CD8-positive, alpha-beta T cell (primary cell): ENCODE measurements at regions of chr11 and their contacts with region 1.

Region 1: DNA sequence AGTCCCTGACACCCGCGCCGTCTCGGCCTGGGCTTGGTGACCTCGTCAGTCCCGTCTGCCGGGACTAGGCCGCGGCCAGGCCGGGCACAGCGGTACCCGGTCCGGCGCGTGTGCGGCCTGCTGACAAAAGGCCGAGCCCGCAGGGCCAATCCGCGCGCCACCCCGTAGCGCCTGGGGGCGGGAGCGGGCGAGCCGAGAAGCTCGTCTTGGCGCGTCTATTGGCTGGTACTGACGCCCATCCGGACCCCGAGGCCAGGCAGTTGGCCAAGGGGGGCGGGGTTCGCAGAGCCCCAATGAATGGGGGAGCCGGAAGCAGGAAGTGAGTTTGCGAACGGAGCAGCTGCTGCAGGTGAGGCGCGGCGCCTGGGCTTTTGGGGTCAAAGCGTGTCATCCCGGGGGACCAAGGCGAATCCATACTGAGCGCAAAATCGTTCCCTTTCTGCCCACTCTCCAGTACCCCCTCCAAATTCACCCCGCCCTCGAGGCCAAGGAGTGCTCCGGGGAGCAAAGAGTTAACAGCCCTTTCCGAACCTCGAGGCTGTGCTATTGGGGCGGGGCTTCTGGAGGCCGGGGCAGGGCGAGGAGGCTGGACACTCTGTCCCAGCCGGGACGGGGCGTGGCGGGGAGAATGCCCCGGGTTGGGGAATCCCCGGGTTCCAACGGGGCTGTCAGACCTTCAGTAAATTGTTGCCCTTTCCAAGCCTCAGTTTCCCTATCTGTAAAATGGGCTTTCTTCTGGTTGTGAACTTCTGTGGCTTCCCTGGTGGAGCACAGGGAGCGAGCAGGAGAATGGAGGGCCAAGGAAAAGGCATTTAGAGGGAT is at the start of gene DPP3:
- DNase-seq: peak; percentile 91 to 97 (median 95)
- ATAC-seq: peak; percentile 98
- H3K4me3 ChIP-seq: peak within 1 kb of the TSS; percentile 90 to 93
- H3K4me3 Mint-ChIP-seq: peak within 1 kb of the TSS; percentile 89
- H3K27ac ChIP-seq: peak within 1 kb of the TSS; percentile 70 to 90
- H3K27ac Mint-ChIP-seq: peak within 1 kb of the TSS; percentile 89
- H3K4me1 ChIP-seq: peaks cover 17% of the 10 kb centered on the region
- H3K4me1 Mint-ChIP-seq: peaks cover 31% of the 10 kb centered on the region
- H3K27me3 ChIP-seq: no peaks in the 10 kb centered on the region
- H3K27me3 Mint-ChIP-seq: no peaks in the 10 kb centered on the region
- CTCF ChIP-seq: no peak
- total RNA-seq, gene DPP3: 13.7 to 15.6 TPM

Region 2: GRCh38 chr11:66510271-66510989 is 30.1 kb after region 1 on chr11 and contains the start of gene BBS1:
- CTCF ChIA-PET with region 1: no interaction called
- POLR2A ChIA-PET with region 1: no interaction called
- intact Hi-C with region 1: loop called (anchors 1 kb)
- DNase-seq: peak; percentile 62 to 91 (median 84)
- ATAC-seq: peak; percentile 98
- H3K4me3 ChIP-seq: peak within 1 kb of the TSS; percentile 68 to 81
- H3K4me3 Mint-ChIP-seq: peak within 1 kb of the TSS; percentile 88
- H3K27ac ChIP-seq: peak within 1 kb of the TSS; percentile 57 to 62
- H3K27ac Mint-ChIP-seq: peak within 1 kb of the TSS; percentile 22
- H3K4me1 ChIP-seq: peaks cover 15% of the 10 kb centered on the region
- H3K4me1 Mint-ChIP-seq: peaks cover 13% of the 10 kb centered on the region
- H3K27me3 ChIP-seq: no peaks in the 10 kb centered on the region
- H3K27me3 Mint-ChIP-seq: no peaks in the 10 kb centered on the region
- CTCF ChIP-seq: no peak
- total RNA-seq, gene BBS1: 10.8 to 13.5 TPM

Region 3: GRCh38 chr11:66530927-66531709 is 50.8 kb after region 1 on chr11:
- CTCF ChIA-PET with region 1: no interaction called
- POLR2A ChIA-PET with region 1: no interaction called
- intact Hi-C with region 1: no loop called
- DNase-seq: no peak
- ATAC-seq: no peak
- H3K4me3 ChIP-seq: no peak overlapping the region
- H3K4me3 Mint-ChIP-seq: no peak overlapping the region
- H3K27ac ChIP-seq: no peak overlapping the region
- H3K27ac Mint-ChIP-seq: no peak overlapping the region
- H3K4me1 ChIP-seq: no peaks in the 10 kb centered on the region
- H3K4me1 Mint-ChIP-seq: no peaks in the 10 kb centered on the region
- H3K27me3 ChIP-seq: no peaks in the 10 kb centered on the region
- H3K27me3 Mint-ChIP-seq: no peaks in the 10 kb centered on the region
- CTCF ChIP-seq: no peak

Region 4: DNA sequence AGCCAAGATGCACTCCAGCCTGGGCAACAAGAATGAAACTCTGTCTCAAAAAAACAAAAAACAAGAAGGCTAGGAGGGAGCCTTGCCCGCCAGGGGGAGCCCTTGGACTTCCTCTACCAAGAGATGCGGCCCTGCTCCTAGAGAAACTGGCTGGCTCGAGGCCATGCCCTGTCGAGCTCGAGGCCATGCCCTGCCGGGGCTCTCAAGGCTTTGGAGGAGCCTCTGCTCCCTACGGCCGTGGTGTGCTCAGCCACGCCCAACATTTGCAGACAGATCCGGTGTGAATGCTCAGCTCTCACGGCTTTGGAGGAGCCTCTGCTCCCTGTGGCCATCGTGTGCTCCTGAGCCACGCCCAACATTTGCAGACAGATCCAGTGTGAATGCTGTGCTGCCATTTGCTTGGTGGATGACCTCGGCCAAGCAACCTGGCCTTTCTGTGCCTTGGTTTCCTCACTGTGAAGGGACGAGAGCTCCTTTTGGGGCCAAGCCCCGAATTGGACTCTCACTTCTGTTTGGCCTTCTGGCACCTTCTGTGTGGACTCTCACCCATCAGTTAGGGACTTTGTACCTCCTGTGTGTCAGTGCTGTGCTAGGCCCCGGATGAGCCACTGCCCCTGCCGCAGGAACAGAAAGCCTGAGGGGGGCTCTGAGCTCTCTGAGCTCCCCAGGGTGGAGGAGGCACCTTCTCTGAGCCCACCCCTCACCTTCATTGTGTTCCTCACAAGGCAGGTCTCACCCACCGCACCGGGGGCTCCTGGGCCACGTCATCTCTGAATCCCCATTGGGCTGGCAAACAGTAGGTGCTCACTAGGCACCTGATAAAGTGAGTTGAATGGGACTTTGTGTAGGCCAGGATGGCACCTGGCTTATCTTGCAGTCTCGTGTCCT is 1777.4 kb after region 1 on chr11:
- CTCF ChIA-PET with region 1: no interaction called
- POLR2A ChIA-PET with region 1: no interaction called
- intact Hi-C with region 1: no loop called
- DNase-seq: peak; percentile 88 to 99 (median 91)
- ATAC-seq: peak; percentile 96
- H3K4me3 ChIP-seq: no peak overlapping the region
- H3K4me3 Mint-ChIP-seq: no peak overlapping the region
- H3K27ac ChIP-seq: no peak overlapping the region
- H3K27ac Mint-ChIP-seq: no peak overlapping the region
- H3K4me1 ChIP-seq: peaks cover 5% of the 10 kb centered on the region
- H3K4me1 Mint-ChIP-seq: peaks cover 3% of the 10 kb centered on the region
- H3K27me3 ChIP-seq: no peaks in the 10 kb centered on the region
- H3K27me3 Mint-ChIP-seq: no peaks in the 10 kb centered on the region
- CTCF ChIP-seq: peak; percentile 70

Region 5: GRCh38 chr11:68370211-68371111 is 1890.1 kb after region 1 on chr11:
- CTCF ChIA-PET with region 1: no interaction called
- POLR2A ChIA-PET with region 1: no interaction called
- intact Hi-C with region 1: no loop called
- DNase-seq: peak in 1 of 9 experiments; percentile 18
- ATAC-seq: no peak
- H3K4me3 ChIP-seq: no peak overlapping the region
- H3K4me3 Mint-ChIP-seq: no peak overlapping the region
- H3K27ac ChIP-seq: no peak overlapping the region
- H3K27ac Mint-ChIP-seq: no peak overlapping the region
- H3K4me1 ChIP-seq: no peaks in the 10 kb centered on the region
- H3K4me1 Mint-ChIP-seq: no peaks in the 10 kb centered on the region
- H3K27me3 ChIP-seq: no peaks in the 10 kb centered on the region
- H3K27me3 Mint-ChIP-seq: no peaks in the 10 kb centered on the region
- CTCF ChIP-seq: no peak